ENCODE measurements at regions of chr14 and their contacts with region 1.

Region 1: DNA sequence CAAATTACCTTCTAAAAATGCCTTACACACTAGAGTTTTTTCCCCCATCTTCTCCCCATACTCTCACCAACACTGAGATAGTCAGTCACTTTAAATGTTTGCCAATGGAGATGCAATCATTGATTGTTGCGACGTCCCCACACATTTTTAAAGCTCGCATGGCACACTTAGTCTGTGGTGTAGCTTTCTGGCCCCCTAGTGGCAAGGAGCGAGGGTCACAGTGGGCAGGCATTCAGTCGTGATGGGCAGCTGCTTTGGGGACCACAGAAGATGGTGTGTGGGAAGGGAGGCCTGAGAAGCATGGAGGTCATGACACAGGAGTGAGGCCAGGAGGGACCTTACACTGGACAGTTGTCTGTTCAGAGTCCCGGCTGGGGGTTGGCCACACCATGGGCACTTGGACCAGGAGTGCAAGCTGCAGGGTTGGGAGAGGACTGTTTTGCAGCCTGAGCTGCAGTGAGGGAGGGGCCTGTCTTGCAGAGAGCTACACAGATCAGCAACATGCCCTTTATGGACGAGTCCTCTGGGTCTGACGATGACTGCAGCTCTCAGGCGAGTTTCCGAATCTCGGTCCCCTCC is 28.7 kb downstream of the PIGH start:
- DNase-seq: peak; percentile 78
- H3K4me3 ChIP-seq: no peak overlapping the region
- H3K27ac ChIP-seq: no peak overlapping the region
- H3K4me1 ChIP-seq: no peaks in the 10 kb centered on the region
- H3K27me3 ChIP-seq: no peaks in the 10 kb centered on the region
- CTCF ChIP-seq: peak; percentile 73 to 96 (median 88)
- EP300 ChIP-seq: no peak
- POLR2A ChIP-seq: no peak

Region 2: GRCh38 chr14:67411820-67412421 is 159.4 kb before region 1 on chr14 and contains the start of gene PLEK2:
- intact Hi-C with region 1: no loop called
- DNase-seq: peak; percentile 62
- H3K4me3 ChIP-seq: peak within 1 kb of the TSS; percentile 21 to 51 (median 44)
- H3K27ac ChIP-seq: no peak within 1 kb of the TSS
- H3K4me1 ChIP-seq: peaks cover 0 to 14% (median 13%) of the 10 kb centered on the region in 4 donors
- H3K27me3 ChIP-seq: peaks cover 4 to 47% (median 7%) of the 10 kb centered on the region in 3 donors
- CTCF ChIP-seq: no peak
- EP300 ChIP-seq: no peak
- POLR2A ChIP-seq: no peak
- total RNA-seq, gene PLEK2: 0.16 to 7.8 (median 1.8) TPM in 3 of 4 donors, not detected in the other

Region 3: GRCh38 chr14:67426983-67427606 is 144.3 kb before region 1 on chr14:
- intact Hi-C with region 1: loop called (anchors 1 kb)
- DNase-seq: peak; percentile 86
- H3K4me3 ChIP-seq: no peak overlapping the region
- H3K27ac ChIP-seq: no peak overlapping the region
- H3K4me1 ChIP-seq: peaks cover 0 to 25% (median 8%) of the 10 kb centered on the region in 4 donors
- H3K27me3 ChIP-seq: peaks cover 0 to 4% (median 0%) of the 10 kb centered on the region in 3 donors
- CTCF ChIP-seq: peak; percentile 79 to 85 (median 83)
- EP300 ChIP-seq: no peak
- POLR2A ChIP-seq: no peak

Region 4: GRCh38 chr14:67477926-67478799 is 93.2 kb before region 1 on chr14:
- intact Hi-C with region 1: no loop called
- DNase-seq: no peak
- H3K4me3 ChIP-seq: no peak overlapping the region
- H3K27ac ChIP-seq: no peak overlapping the region
- H3K4me1 ChIP-seq: no peaks in the 10 kb centered on the region
- H3K27me3 ChIP-seq: no peaks in the 10 kb centered on the region
- CTCF ChIP-seq: no peak
- EP300 ChIP-seq: no peak
- POLR2A ChIP-seq: no peak

Region 5: GRCh38 chr14:67526676-67527459 is 44.5 kb before region 1 on chr14:
- intact Hi-C with region 1: loop called (anchors 2 kb)
- DNase-seq: no peak
- H3K4me3 ChIP-seq: no peak overlapping the region
- H3K27ac ChIP-seq: no peak overlapping the region
- H3K4me1 ChIP-seq: no peaks in the 10 kb centered on the region
- H3K27me3 ChIP-seq: peaks cover 0 to 16% (median 0%) of the 10 kb centered on the region in 3 donors
- CTCF ChIP-seq: peak in 3 of 4 experiments; percentile 33 to 76 (median 50)
- EP300 ChIP-seq: no peak
- POLR2A ChIP-seq: no peak

Measured in sigmoid colon (tissue), 7 donors.